ENCODE measurements at regions of chr20 and their contacts with region 1.

Region 1: GRCh38 chr20:16528078-16528477 is 45.2 kb downstream of the KIF16B start:
- DNase-seq: no peak
- ATAC-seq: peak in 1 of 2 donors; percentile 36

Region 2: DNA sequence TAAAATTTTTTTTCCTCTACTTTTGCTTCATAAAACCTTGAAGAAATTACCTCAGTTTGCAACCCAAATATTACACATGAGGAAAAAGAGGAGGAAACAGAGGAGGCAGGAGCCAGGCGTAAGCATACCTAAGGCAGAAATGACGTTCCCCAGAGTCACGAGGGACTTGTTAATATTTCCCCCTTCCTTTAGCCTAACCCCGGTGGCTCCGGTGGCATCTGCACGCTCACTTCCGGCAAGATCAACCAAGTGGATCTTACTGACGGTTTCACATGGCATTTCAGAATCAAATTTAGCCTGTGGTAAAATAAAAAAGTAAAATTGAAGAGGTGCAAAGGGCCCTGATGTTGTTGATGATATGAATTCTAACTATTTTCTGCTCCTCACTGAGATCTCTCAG is 22.2 kb before region 1 on chr20:
- intact Hi-C with region 1: no loop called
- DNase-seq: no peak
- ATAC-seq: no peak

Region 3: DNA sequence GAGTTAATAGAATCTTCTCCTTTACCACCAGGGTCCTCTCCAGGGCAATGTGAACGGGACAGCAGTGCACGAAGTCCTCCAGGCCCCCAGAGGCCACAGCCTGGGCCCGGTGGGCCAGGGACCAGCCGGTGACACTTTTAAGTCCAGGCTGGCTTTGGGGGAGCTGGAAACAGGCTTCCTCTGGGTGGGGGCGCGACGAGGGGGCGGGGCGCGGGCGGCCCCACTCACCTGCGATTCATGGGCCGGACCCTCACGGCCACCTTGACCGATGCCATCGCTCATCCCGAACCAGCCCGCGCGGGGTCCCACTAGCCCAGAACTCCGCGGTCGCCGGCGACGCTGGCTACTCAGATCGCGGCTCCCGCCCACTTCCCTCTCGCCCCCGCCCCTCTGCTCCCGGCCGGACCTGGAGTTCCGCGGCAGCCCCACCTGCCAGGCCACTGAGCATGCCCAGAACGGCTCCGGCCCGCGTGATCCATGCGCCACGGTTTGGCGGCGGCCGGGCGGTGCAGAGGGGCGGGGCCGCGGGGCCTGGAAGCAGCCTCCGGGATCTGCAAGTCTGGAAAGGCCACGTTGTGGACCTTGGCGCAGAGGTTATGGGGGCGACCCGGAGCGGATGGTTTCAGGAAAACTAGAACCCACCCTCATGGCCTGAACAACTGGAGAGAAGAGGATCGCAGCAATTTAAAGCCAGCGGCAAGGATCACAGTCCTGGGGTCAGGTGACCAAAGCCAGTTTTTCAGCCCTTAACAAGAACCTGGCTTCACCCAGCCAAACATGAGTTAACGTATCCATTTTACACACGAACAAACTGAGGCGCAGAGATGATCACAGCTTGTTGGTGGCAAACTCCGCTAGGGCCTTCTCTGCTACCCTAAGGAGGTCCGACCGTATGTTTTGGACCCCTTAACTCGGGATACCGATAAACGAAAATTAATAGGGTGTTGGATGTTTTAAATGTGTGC is 45.2 kb after region 1 on chr20 and contains the start of gene KIF16B:
- intact Hi-C with region 1: loop called in 1 of 2 experiments (anchors 10 kb)
- DNase-seq: peak; percentile 93
- ATAC-seq: peak; percentile 95 to 97
- total RNA-seq, gene KIF16B: 17.0 to 17.7 TPM